Left lung (tissue), 14 donors: ENCODE measurements at regions of chr2 and their contacts with region 1.

Region 1: GRCh38 chr2:1744446-1745170 is at the start of gene PXDN:
- DNase-seq: peak in 3 of 4 donors; percentile 78 to 82 (median 81)
- ATAC-seq: peak; percentile 56
- H3K4me3 ChIP-seq: peak within 1 kb of the TSS; percentile 54 to 57
- H3K27ac ChIP-seq: peak within 1 kb of the TSS; percentile 79 to 85
- H3K4me1 ChIP-seq: peaks cover 0 to 28% of the 10 kb centered on the region in 2 donors
- H3K27me3 ChIP-seq: peaks cover 3 to 44% of the 10 kb centered on the region in 2 donors
- CTCF ChIP-seq: no peak
- polyA plus RNA-seq, gene PXDN: 158 to 215 (median 185) TPM

Region 2: DNA sequence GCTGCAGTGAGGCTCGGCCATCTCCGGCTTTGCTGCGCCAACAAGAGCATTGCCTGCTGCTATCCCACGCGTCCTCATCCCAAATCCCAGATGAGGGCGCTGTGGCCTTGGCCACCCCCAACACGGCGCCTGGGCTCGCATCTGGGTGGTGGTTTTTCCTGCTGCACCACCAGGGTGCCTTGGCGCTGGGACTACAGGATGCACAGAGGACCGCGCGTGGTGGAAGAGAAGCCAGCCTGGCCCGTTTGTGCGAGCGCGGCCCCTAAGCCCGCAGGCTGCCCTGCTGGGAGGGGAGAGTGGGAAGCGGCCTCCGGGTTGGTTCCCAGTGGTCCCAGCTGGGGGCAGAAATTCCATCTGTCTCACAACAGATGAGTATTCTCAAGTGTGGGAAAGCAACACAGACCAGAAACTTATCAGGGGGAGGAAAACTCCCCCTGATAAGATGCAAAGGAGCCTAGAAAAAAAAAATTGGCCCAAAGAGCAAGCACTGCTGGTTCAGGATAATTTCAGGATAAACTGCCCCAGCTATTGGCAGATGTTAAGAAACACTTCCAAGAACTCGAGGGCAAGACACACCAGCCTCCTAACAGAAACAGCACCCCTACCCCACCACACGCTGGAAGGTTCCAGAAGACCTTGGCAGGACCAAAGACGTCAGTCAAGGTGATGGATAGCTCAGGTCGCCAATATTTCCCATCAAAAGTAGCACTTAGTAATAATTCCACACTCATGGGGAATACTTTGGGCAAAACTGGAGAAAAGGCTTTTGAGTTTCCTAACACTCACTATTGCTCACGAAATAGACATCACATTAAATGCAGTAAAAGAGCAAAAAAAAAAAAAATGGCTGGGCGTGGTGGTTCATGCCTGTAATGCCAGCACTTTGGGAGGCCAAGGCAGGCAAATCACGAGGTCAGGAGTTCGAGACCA is 152.4 kb before region 1 on chr2:
- intact Hi-C with region 1: loop called in 1 of 2 experiments (anchors 5 kb)
- DNase-seq: peak; percentile 52 to 87 (median 82)
- ATAC-seq: peak; percentile 81
- H3K4me3 ChIP-seq: no peak overlapping the region
- H3K27ac ChIP-seq: peak overlapping the region in 1 of 2 donors; percentile 55
- H3K4me1 ChIP-seq: peaks cover 9 to 19% of the 10 kb centered on the region in 2 donors
- H3K27me3 ChIP-seq: peaks cover 0 to 17% of the 10 kb centered on the region in 2 donors
- CTCF ChIP-seq: peak; percentile 46 to 56